ENCODE measurements at regions of chr12 and their contacts with region 1.

Region 1: GRCh38 chr12:56636675-56637540 is 6.8 kb upstream of the BAZ2A start:
- DNase-seq: peak; percentile 98
- H3K4me3 ChIP-seq: peak overlapping the region; percentile 68 to 85 (median 82)
- H3K27ac ChIP-seq: peak overlapping the region; percentile 85
- H3K4me1 ChIP-seq: peaks cover 22% of the 10 kb centered on the region
- H3K27me3 ChIP-seq: no peaks in the 10 kb centered on the region
- CTCF ChIP-seq: peak; percentile 67 to 78

Region 2: GRCh38 chr12:56490360-56490759 is 146.5 kb before region 1 on chr12:
- CTCF ChIA-PET with region 1: no interaction called
- dilution Hi-C with region 1: no loop called
- in situ Hi-C with region 1: no loop called
- intact Hi-C with region 1: loop called (anchors 5 kb)
- DNase-seq: no peak
- H3K4me3 ChIP-seq: no peak overlapping the region
- H3K27ac ChIP-seq: no peak overlapping the region
- H3K4me1 ChIP-seq: peaks cover 16% of the 10 kb centered on the region
- H3K27me3 ChIP-seq: no peaks in the 10 kb centered on the region
- CTCF ChIP-seq: no peak

Region 3: DNA sequence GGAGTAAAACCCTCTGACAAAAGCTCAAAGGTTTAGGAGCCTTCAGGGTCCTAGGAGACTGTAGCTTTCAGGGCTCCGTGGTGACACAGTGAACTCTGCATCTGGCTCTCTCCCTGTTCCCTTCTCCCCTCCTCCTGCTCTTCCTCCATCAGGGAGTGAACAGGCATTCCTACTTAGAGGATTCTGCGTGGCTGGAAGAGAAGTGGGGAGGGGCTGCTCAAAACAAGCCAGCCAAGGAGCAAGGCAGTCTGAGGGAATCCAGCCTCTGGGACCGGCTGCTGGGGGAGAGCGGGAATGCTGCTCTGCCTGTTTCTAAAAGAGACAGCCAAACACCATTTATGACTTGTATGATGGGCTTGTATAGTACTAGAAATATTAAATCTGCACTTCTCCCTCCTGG is 65.8 kb before region 1 on chr12:
- CTCF ChIA-PET with region 1: no interaction called
- dilution Hi-C with region 1: no loop called
- in situ Hi-C with region 1: no loop called
- intact Hi-C with region 1: loop called (anchors 2 kb)
- DNase-seq: no peak
- H3K4me3 ChIP-seq: no peak overlapping the region
- H3K27ac ChIP-seq: no peak overlapping the region
- H3K4me1 ChIP-seq: peaks cover 16% of the 10 kb centered on the region
- H3K27me3 ChIP-seq: no peaks in the 10 kb centered on the region
- CTCF ChIP-seq: no peak

Region 4: GRCh38 chr12:56614627-56615026 is 22.3 kb before region 1 on chr12:
- CTCF ChIA-PET with region 1: no interaction called
- dilution Hi-C with region 1: no loop called
- in situ Hi-C with region 1: no loop called
- intact Hi-C with region 1: no loop called
- DNase-seq: no peak
- H3K4me3 ChIP-seq: no peak overlapping the region
- H3K27ac ChIP-seq: no peak overlapping the region
- H3K4me1 ChIP-seq: no peaks in the 10 kb centered on the region
- H3K27me3 ChIP-seq: no peaks in the 10 kb centered on the region
- CTCF ChIP-seq: no peak

Region 5: DNA sequence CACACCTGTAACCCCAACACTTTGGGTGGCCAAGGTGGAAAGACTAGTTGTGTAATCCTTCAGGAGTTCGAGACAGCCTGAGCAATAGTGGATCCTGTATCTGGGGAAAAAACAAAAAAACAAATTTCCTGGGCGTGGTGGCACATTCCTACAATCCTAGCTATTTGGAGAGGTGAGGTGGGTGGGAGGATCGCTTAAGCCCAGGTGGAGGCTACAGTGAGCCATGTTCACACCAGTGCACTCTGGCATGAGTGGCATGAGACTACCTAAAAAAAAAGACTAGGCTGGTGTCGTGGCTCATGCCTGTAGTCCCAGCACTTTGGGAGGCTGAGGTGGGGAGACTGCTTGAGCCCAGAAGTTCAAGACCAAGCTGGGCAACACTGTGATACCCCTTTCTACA is 33.9 kb after region 1 on chr12:
- CTCF ChIA-PET with region 1: no interaction called
- dilution Hi-C with region 1: loop called (anchors 5 kb)
- in situ Hi-C with region 1: no loop called
- intact Hi-C with region 1: no loop called
- DNase-seq: no peak
- H3K4me3 ChIP-seq: no peak overlapping the region
- H3K27ac ChIP-seq: peak overlapping the region; percentile 5
- H3K4me1 ChIP-seq: peaks cover 12% of the 10 kb centered on the region
- H3K27me3 ChIP-seq: no peaks in the 10 kb centered on the region
- CTCF ChIP-seq: no peak

Region 6: DNA sequence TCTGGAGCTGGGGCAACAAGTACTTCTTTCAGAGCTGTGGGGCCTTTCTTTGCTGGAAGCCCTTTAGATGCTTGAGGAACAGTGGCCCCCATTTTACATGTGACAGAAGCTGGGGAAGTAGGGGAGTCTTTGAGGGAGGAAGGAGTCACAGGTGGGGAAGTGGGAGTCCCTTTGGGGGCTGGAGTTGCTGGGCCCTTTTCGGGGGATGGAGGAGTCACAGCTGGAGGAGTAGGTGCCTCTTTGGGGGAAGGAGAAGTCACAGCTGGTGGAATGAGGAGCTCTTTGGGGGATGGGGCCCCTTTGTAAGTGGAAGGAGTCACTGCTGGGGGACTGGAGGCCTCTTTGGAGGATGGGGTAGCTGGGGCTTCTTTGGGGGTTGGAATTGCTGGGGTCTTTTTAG is 79.5 kb after region 1 on chr12:
- CTCF ChIA-PET with region 1: interaction called, 3 read pairs
- dilution Hi-C with region 1: loop called (anchors 5 kb)
- in situ Hi-C with region 1: no loop called
- intact Hi-C with region 1: no loop called
- DNase-seq: no peak
- H3K4me3 ChIP-seq: no peak overlapping the region
- H3K27ac ChIP-seq: no peak overlapping the region
- H3K4me1 ChIP-seq: peaks cover 11% of the 10 kb centered on the region
- H3K27me3 ChIP-seq: no peaks in the 10 kb centered on the region
- CTCF ChIP-seq: no peak

Region 7: DNA sequence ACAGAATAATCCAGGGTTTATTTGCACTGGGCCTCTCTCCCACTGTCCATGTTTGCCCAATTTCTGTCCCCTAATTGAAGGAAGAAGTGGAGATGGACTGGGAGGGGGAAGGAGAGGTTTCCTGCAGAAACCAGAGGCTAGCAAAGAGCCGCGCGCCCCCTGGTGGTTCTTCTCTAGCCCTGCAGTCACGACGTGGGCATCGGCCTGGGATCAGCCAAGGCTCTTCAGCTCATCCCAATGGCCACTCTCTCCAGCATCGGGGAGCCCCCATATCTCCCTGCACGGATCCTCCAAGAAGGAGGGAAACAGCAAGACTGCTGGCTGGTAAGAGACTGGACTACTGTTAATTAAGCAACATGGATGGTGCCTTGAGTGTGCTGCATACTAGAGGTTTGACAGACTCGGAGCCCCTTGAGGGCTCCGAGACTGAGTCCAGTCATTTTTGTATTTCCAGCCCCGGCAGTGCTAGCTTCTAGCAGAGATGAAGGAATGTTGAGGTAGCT is 350.7 kb after region 1 on chr12:
- CTCF ChIA-PET with region 1: no interaction called
- dilution Hi-C with region 1: no loop called
- in situ Hi-C with region 1: no loop called
- intact Hi-C with region 1: loop called (anchors 10 kb)
- DNase-seq: peak; percentile 58
- H3K4me3 ChIP-seq: no peak overlapping the region
- H3K27ac ChIP-seq: no peak overlapping the region
- H3K4me1 ChIP-seq: peaks cover 18% of the 10 kb centered on the region
- H3K27me3 ChIP-seq: no peaks in the 10 kb centered on the region
- CTCF ChIP-seq: peak; percentile 94 to 95